Left colon (tissue), 2 donors: ENCODE measurements at regions of chr4 and their contacts with region 1.

Region 1: GRCh38 chr4:158253350-158253980 is 43.2 kb downstream of the TMEM144 start:
- DNase-seq: peak in 1 of 2 donors; percentile 45
- ATAC-seq: peak; percentile 67

Region 2: DNA sequence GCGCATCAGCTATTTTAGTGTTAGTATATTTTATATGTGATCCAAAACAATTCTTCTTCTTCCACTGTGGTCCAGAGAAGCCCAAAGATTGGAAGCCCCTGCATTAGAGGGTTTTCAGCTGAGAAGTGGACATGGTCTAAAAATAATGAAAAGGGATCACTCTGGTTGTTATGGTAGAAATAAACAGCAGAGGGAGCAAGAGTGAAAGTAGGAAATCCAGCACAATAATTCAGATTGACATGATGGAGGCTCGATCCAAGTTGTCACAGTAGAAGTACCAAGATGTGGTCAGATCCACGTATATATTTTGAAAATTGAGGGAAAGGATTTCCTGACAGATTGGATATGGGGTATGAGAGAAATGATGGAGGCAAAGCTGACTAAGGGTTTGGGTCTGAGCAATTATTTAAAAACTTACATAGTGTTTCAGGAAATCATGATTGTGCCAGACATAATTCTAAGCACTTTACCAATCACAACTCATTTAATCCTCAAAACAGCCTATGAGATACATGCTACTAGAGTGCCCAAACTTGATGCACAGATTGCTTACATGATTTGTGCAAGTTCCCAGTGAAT is 60.2 kb before region 1 on chr4:
- intact Hi-C with region 1: loop called in 1 of 2 experiments (anchors 10 kb)
- DNase-seq: no peak
- ATAC-seq: peak; percentile 75